ENCODE measurements at regions of chr6 and their contacts with region 1.

Region 1: GRCh38 chr6:18155150-18155863 is at the start of gene KDM1B:
- DNase-seq: peak; percentile 96
- ATAC-seq: peak; percentile 94
- H3K4me3 ChIP-seq: peak within 1 kb of the TSS; percentile 98 to 99 (median 99)
- H3K27ac ChIP-seq: peak within 1 kb of the TSS; percentile 89
- H3K4me1 ChIP-seq: peaks cover 29% of the 10 kb centered on the region
- H3K27me3 ChIP-seq: no peaks in the 10 kb centered on the region
- CTCF ChIP-seq: no peak
- EP300 ChIP-seq: no peak
- POLR2A ChIP-seq: peak in 1 of 2 experiments; percentile 68; a peak in 1 of 4 replicates
- RAD21 ChIP-seq: peak; percentile 17; the same call in 1 of the 2 replicates
- total RNA-seq, gene KDM1B: 13.2 and 22.1 TPM in 2 replicates

Region 2: GRCh38 chr6:17754254-17754653 is 401.1 kb before region 1 on chr6:
- CTCF ChIA-PET with region 1: no interaction called
- POLR2A ChIA-PET with region 1: no interaction called
- in situ Hi-C with region 1: no loop called
- intact Hi-C with region 1: no loop called
- DNase-seq: no peak
- ATAC-seq: peak; percentile 54
- H3K4me3 ChIP-seq: no peak overlapping the region
- H3K27ac ChIP-seq: no peak overlapping the region
- H3K4me1 ChIP-seq: no peaks in the 10 kb centered on the region
- H3K27me3 ChIP-seq: no peaks in the 10 kb centered on the region
- CTCF ChIP-seq: no peak
- EP300 ChIP-seq: no peak
- POLR2A ChIP-seq: no peak
- RAD21 ChIP-seq: no peak

Region 3: GRCh38 chr6:17987576-17988421 is 167.5 kb before region 1 on chr6 and contains the start of gene KIF13A:
- CTCF ChIA-PET with region 1: no interaction called
- POLR2A ChIA-PET with region 1: interaction called, 4 read pairs
- in situ Hi-C with region 1: no loop called
- intact Hi-C with region 1: loop called (anchors 10 kb)
- DNase-seq: peak; percentile 54
- ATAC-seq: peak; percentile 82
- H3K4me3 ChIP-seq: peak within 1 kb of the TSS; percentile 80 to 99 (median 92)
- H3K27ac ChIP-seq: peak within 1 kb of the TSS; percentile 88
- H3K4me1 ChIP-seq: peaks cover 40% of the 10 kb centered on the region
- H3K27me3 ChIP-seq: no peaks in the 10 kb centered on the region; a peak in 1 of 5 replicates
- CTCF ChIP-seq: peak; percentile 27; the same call in 1 of the 2 replicates
- EP300 ChIP-seq: no peak
- POLR2A ChIP-seq: peak; percentile 18 to 31; a peak in 1 of 4 replicates
- RAD21 ChIP-seq: peak; percentile 71
- total RNA-seq, gene KIF13A: 37.2 and 48.3 TPM in 2 replicates

Region 4: GRCh38 chr6:18221288-18221615 is 65.9 kb after region 1 on chr6:
- CTCF ChIA-PET with region 1: no interaction called
- POLR2A ChIA-PET with region 1: no interaction called
- in situ Hi-C with region 1: no loop called
- intact Hi-C with region 1: loop called (anchors 5 kb)
- DNase-seq: no peak
- ATAC-seq: peak; percentile 12; the same call in 1 of the 3 replicates
- H3K4me3 ChIP-seq: no peak overlapping the region
- H3K27ac ChIP-seq: no peak overlapping the region
- H3K4me1 ChIP-seq: no peaks in the 10 kb centered on the region
- H3K27me3 ChIP-seq: no peaks in the 10 kb centered on the region
- CTCF ChIP-seq: no peak
- EP300 ChIP-seq: no peak
- POLR2A ChIP-seq: no peak
- RAD21 ChIP-seq: no peak

Region 5: DNA sequence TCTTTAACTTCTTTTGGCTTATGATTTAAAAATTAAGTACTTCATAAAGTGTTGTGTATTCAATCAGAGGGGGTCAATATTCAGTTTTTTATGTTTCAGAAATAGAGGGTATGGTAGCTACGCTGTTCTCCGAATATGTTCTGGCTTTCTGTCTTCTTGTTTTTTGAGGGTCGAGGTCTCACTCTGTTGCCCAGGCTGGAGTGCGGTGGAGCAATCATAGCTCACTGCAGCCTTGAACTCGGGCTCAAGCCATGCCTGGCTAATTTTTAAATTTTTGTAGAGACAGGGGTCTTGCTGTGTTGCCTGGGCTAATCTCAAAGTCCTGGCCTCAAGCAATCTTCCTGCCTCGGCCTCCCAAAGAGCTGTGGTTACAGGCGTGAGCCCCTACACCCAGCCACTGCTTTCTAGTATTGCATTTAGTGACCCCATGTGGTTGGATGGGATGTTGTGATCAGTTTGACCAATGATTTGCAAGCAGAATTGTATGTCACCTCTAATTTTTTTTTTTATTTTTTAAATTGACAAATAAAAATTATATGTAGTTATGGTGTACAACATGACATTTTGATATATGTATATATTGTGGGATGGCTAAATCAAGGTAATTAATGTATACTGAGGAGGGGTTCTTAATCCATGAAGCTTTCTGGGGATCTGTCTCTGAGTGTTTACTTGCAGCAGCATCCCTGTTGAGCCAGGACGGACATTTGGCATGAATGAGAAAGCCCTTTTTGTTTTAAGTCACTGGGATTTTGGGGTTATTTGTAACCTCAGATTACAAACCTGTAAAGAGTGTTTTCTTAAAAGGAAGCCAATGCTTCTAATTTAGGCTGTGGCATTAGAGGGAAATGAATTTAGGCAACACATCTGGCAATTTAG is 147.5 kb after region 1 on chr6:
- CTCF ChIA-PET with region 1: no interaction called
- POLR2A ChIA-PET with region 1: no interaction called
- in situ Hi-C with region 1: no loop called
- intact Hi-C with region 1: loop called (anchors 5 kb)
- DNase-seq: peak; percentile 48
- ATAC-seq: peak; percentile 91
- H3K4me3 ChIP-seq: no peak overlapping the region
- H3K27ac ChIP-seq: no peak overlapping the region
- H3K4me1 ChIP-seq: peaks cover 5% of the 10 kb centered on the region; the same call in 1 of the 2 replicates
- H3K27me3 ChIP-seq: no peaks in the 10 kb centered on the region
- CTCF ChIP-seq: peak; percentile 66
- EP300 ChIP-seq: no peak
- POLR2A ChIP-seq: no peak
- RAD21 ChIP-seq: no peak